PC-9 (cell line): ENCODE measurements at regions of chr17 and their contacts with region 1.

Region 1: GRCh38 chr17:7403977-7404736 is at the start of gene TMEM256:
- DNase-seq: peak; percentile 96 to 99
- H3K4me3 ChIP-seq: peak within 1 kb of the TSS; percentile 76
- H3K27ac ChIP-seq: peak within 1 kb of the TSS; percentile 51; the same call in 1 of the 2 replicates
- H3K4me1 ChIP-seq: peaks cover 15% of the 10 kb centered on the region
- H3K27me3 ChIP-seq: no peaks in the 10 kb centered on the region
- CTCF ChIP-seq: no peak
- total RNA-seq, gene TMEM256: 55.4 and 91.7 TPM in 2 replicates

Region 2: GRCh38 chr17:7219812-7220581 is 184.2 kb before region 1 on chr17 and contains the starts of genes ACADVL and DLG4:
- CTCF ChIA-PET with region 1: interaction called, 13 read pairs
- POLR2A ChIA-PET with region 1: interaction called, 8 read pairs
- intact Hi-C with region 1: no loop called
- DNase-seq: peak; percentile 95 to 98
- H3K4me3 ChIP-seq: peak within 1 kb of the TSS; percentile 77
- H3K27ac ChIP-seq: peak within 1 kb of the TSS; percentile 98
- H3K4me1 ChIP-seq: peaks cover 36% of the 10 kb centered on the region
- H3K27me3 ChIP-seq: no peaks in the 10 kb centered on the region
- CTCF ChIP-seq: no peak
- total RNA-seq, gene ACADVL: 531 and 604 TPM in 2 replicates
- total RNA-seq, gene DLG4: 27.1 and 32.8 TPM in 2 replicates

Region 3: GRCh38 chr17:7261172-7261927 is 142.8 kb before region 1 on chr17:
- CTCF ChIA-PET with region 1: no interaction called
- POLR2A ChIA-PET with region 1: interaction called, 3 read pairs
- intact Hi-C with region 1: loop called (anchors 5 kb)
- DNase-seq: peak; percentile 74 to 91
- H3K4me3 ChIP-seq: peak overlapping the region; percentile 97
- H3K27ac ChIP-seq: peak overlapping the region; percentile 100
- H3K4me1 ChIP-seq: peaks cover 40% of the 10 kb centered on the region
- H3K27me3 ChIP-seq: no peaks in the 10 kb centered on the region
- CTCF ChIP-seq: no peak; the same call in 1 of the 2 replicates

Region 4: DNA sequence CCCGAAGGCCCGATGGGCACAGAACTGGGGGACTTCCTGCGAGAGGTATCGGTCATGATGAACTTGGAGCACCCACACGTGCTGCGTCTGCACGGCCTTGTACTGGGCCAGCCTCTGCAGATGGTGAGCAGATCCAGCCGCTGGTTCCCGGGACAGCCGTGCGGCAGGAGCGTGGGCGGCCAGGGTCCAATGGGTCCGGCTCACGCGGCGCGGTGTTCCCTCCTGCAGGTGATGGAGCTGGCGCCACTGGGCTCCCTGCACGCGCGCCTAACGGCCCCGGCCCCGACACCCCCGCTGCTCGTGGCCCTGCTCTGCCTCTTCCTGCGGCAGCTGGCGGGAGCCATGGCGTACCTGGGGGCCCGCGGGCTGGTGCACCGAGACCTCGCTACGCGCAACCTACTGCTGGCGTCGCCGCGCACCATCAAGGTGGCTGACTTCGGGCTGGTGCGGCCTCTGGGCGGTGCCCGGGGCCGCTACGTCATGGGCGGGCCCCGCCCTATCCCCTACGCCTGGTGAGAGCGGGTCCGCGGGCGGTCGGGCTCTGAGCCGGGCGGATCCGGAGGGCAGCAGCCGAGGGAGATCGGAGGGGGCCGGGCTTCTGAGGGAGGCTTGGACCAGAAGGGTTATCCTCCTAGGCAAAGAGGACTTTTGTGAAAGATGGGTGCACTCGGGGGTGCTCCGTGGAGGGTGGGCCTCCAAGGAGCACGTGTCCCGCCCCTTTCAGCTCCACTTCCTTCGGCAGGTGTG is 20.2 kb before region 1 on chr17:
- CTCF ChIA-PET with region 1: interaction called, 3 read pairs
- POLR2A ChIA-PET with region 1: interaction called, 24 read pairs
- intact Hi-C with region 1: no loop called
- DNase-seq: no peak
- H3K4me3 ChIP-seq: no peak overlapping the region
- H3K27ac ChIP-seq: no peak overlapping the region
- H3K4me1 ChIP-seq: no peaks in the 10 kb centered on the region
- H3K27me3 ChIP-seq: no peaks in the 10 kb centered on the region
- CTCF ChIP-seq: no peak

Region 5: DNA sequence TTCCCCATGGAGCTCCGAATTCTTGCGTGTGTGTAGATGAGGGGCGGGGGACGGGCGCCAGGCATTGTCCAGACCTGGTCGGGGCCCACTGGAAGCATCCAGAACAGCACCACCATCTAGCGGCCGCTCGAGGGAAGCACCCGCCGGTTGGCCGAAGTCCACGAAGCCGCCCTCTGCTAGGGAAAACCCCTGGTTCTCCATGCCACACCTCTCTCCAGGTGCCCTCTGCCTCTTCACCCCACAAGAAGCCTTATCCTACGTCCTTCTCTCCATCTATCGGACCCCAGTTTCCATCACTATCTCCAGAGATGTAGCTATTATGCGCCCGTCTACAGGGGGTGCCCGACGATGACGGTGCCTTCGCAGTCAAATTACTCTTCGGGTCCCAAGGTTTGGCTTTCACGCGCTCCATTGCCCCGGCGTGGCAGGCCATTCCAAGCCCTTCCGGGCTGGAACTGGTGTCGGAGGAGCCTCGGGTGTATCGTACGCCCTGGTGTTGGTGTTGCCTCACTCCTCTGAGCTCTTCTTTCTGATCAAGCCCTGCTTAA is 156.9 kb after region 1 on chr17:
- CTCF ChIA-PET with region 1: interaction called, 3 read pairs
- POLR2A ChIA-PET with region 1: no interaction called
- intact Hi-C with region 1: loop called (anchors 2 kb)
- DNase-seq: peak; percentile 62 to 93
- H3K4me3 ChIP-seq: peak overlapping the region; percentile 92
- H3K27ac ChIP-seq: peak overlapping the region; percentile 60
- H3K4me1 ChIP-seq: peaks cover 9% of the 10 kb centered on the region
- H3K27me3 ChIP-seq: no peaks in the 10 kb centered on the region
- CTCF ChIP-seq: peak; percentile 69